A549 (cell line): ENCODE measurements at regions of chr14 and their contacts with region 1.

Region 1: DNA sequence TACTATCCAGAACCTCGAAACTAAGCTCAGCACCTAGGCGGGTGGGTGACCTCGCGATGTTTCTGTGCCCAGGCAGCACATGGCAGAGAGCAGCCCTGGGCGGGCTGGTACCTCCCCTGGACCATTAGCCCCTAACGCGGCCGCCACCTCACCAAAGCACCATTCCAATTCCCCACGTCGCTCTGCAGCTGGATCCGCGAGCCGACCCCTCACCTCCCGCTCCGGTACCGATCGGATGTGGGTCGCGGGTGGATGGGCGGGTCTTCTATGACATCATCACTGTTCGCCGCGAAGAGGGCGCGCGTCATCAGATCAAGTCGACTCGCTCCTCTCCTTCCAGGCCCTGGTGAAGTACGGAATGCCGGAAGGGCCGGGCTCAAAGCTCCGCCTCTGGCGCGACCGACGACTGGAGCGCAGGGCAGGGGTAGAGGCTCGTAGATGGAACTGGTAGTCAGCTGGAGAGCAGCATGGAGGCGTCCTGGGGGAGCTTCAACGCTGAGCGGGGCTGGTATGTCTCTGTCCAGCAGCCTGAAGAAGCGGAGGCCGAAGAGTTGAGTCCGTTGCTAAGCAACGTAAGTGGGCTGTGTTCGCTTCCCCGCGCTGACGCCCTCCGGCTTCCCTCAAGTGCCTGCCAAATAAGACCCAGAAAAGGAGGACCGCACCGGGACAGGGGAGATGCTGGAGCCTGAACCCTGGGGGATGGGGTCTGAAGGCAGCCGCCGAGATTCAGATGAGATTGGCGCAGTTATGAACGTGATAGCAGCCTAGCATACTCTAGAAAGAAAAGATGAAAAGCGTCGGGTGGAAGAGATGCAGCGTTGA is at the starts of genes SLC38A6 and TRMT5:
- DNase-seq: peak; percentile 87 to 96
- ATAC-seq: peak; percentile 98
- H3K4me3 ChIP-seq: peak within 1 kb of the TSS; percentile 70
- H3K27ac ChIP-seq: peak within 1 kb of the TSS; percentile 80 to 95
- H3K4me1 ChIP-seq: peaks cover 42% of the 10 kb centered on the region
- CTCF ChIP-seq: no peak
- EP300 ChIP-seq: no peak
- POLR2A ChIP-seq: peak; percentile 62
- RAD21 ChIP-seq: peak in 1 of 2 experiments; percentile 17; a peak in 1 of 5 replicates
- polyA plus RNA-seq, gene SLC38A6: 31.4 and 37.8 TPM in 2 replicates
- polyA plus RNA-seq, gene TRMT5: 17.0 and 18.2 TPM in 2 replicates

Region 2: DNA sequence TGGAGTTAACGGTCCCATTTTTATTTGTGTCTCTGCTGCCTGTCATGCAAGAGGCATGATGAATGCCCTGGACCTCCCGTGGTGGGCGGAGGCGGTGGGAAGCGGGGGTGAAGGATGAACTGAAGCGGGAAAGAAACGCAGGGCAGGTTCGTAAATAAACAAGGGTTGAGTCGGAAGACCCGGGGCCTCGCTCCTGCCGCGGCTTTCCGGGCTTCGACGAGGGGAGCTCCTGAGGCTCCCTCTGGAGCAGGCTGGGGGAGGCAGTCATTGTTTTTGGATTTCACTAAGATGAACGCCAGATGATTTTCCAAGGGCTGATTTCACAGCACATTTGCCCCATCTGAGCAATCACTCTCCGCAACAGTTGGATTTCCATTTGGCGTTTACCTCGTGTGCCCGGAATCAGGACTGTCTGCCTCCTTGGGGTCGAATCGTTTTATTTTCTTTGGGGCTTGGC is 130.2 kb after region 1 on chr14:
- CTCF ChIA-PET with region 1: no interaction called
- POLR2A ChIA-PET with region 1: no interaction called
- DNase-seq: no peak
- ATAC-seq: no peak
- H3K4me3 ChIP-seq: no peak overlapping the region
- H3K27ac ChIP-seq: peak overlapping the region in 1 of 2 experiments; percentile 69; a peak in 3 of 6 replicates
- H3K4me1 ChIP-seq: no peaks in the 10 kb centered on the region
- CTCF ChIP-seq: no peak
- EP300 ChIP-seq: no peak
- POLR2A ChIP-seq: no peak
- RAD21 ChIP-seq: no peak

Region 3: DNA sequence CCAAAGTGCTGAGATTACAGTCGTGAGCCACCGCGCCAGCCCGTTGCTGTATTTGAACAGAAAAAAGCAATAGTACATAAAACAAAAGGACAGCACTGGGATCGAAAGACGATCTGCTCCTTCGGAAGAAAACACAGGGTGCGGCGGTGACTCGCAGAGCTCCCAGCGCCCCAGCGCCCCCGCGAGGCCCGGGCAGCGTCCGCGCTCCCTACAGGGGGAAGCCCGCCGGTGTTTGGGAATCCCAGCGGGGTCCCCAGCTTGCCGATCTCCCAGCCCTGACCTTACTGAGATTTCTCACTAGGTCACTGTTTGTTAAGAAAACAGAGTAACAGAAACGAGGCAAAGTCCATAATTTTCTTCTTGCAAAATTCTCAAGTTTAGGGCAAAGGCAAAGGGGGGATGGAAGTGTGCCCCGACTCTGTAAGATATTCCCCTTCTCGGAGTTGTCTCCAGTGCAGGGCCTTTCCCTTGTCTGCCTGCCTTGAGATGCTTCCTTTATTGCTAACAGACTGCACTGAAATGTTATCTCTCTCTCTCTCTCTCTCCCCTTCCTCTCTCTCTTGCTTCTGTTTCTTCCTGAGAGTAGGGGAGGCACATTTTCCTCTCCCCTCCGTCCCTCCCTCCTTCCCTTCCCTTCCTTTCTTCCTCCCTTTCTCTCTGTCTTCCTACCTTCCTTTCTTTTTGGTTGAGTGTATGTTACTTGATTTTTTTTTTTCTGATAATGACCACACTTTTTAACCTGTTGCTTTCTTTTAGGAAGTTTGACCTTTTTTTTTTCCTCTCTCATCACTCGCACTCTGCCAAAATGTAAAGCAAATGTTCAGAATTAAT is 208.2 kb after region 1 on chr14:
- CTCF ChIA-PET with region 1: no interaction called
- POLR2A ChIA-PET with region 1: interaction called, 12 read pairs
- DNase-seq: peak; percentile 74 to 87
- ATAC-seq: peak; percentile 92 to 95
- H3K4me3 ChIP-seq: peak overlapping the region; percentile 61
- H3K27ac ChIP-seq: peak overlapping the region; percentile 88 to 95
- H3K4me1 ChIP-seq: peaks cover 26% of the 10 kb centered on the region
- CTCF ChIP-seq: peak; percentile 76
- EP300 ChIP-seq: no peak
- POLR2A ChIP-seq: no peak
- RAD21 ChIP-seq: peak; percentile 71 to 87